Left ventricle myocardium superior (tissue), 1 donor: ENCODE measurements at regions of chr1 and their contacts with region 1.

Region 1: DNA sequence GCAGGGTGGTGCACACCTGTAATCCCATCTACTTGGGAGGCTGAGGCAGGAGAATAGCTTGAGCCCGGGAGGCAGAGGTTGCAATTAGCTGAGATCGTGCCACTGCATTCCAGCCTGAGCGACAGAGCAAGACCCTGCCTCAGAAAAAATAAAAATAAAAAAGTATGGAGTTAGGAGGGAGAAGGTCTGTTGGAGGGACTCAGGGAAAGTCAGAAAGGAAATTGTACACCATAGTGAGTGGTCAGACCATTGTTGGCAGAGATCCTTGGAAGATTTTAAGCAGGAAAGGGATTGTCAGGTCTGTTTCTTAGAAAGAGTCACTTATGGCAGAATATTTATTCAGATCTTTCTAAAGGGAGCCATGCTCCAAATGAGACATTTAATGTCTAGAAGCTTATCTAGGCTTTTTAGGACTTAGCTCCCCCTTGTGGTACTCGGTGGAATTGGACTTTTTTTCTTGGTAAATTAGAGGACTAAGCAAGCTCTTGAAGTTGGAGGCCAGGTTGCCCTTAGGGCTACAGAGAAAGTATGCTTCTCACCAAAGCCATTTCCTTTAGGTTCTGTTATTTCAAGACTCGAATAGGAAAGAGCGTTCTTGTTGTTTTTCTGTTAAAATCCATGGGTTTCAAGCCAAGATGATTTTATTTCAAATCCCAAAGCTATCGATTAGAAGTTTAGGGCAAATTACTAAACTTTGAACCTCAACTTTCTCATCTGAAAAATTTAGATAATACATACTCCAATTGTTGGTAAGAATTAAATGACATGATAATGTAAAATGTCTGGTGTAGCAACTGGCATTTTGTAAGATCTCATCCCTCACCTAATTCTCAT is 16.5 kb downstream of the MIA3 start:
- DNase-seq: no peak
- ATAC-seq: peak; percentile 72

Region 2: GRCh38 chr1:222465211-222466041 is 169.0 kb before region 1 on chr1:
- intact Hi-C with region 1: loop called (anchors 5 kb)
- DNase-seq: peak; percentile 95
- ATAC-seq: peak; percentile 100